ENCODE measurements at regions of chr10 and their contacts with region 1.

Region 1: GRCh38 chr10:3136763-3137611 is 35.6 kb downstream of the PITRM1 start:
- DNase-seq: peak; percentile 83 to 93
- ATAC-seq: peak; percentile 84 to 92 (median 90)
- H3K4me3 ChIP-seq: peak overlapping the region; percentile 48
- H3K27ac ChIP-seq: peak overlapping the region; percentile 87
- H3K4me1 ChIP-seq: peaks cover 18% of the 10 kb centered on the region
- H3K27me3 ChIP-seq: no peaks in the 10 kb centered on the region
- CTCF ChIP-seq: no peak

Region 2: GRCh38 chr10:2772816-2773631 is 364.0 kb before region 1 on chr10:
- intact Hi-C with region 1: no loop called
- DNase-seq: no peak
- ATAC-seq: no peak
- H3K4me3 ChIP-seq: no peak overlapping the region
- H3K27ac ChIP-seq: no peak overlapping the region
- H3K4me1 ChIP-seq: no peaks in the 10 kb centered on the region
- H3K27me3 ChIP-seq: no peaks in the 10 kb centered on the region
- CTCF ChIP-seq: no peak

Region 3: DNA sequence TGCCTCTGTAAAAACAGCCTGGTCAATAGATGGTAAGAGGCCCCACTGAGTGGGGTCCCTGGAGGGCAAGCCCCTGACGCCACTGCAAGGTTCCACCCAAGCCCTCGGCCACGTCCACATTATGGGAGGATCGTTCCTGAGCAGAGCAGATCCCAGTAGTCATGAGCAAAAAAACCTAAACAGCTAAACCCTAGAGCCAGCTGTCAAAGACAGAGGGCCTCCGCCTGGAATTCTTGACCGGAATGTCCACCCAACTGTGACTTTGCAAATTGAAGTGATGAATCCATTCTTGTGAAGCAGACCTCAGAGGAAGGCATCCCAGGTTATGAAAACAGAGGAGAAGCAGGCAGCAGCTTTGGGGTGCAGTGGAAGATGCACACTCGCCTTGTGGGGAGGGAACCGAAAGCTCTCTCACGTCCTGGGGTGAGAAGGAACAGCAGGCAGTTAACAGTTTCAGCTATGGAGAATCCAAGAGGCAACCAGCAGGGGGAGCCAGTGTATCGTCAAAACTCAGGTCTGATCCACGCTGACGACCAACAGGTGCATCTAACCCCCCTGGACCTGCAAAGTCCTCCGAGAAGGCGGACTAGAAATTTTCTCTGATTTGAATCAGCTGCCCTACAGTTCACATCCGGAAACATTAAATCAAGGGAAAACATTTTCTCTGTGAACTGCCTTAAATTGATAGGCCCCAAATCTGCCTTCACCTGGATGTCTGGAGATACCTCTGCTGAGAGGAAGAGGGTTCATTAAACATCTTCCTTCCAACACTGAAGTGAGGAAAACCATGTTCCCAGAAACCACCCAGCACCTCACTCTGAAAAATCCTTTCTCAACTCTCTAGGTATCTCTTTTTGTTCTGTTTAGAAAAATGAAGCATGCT is 208.8 kb before region 1 on chr10:
- intact Hi-C with region 1: no loop called
- DNase-seq: peak; percentile 43 to 74
- ATAC-seq: peak; percentile 86 to 90 (median 88)
- H3K4me3 ChIP-seq: no peak overlapping the region
- H3K27ac ChIP-seq: no peak overlapping the region
- H3K4me1 ChIP-seq: no peaks in the 10 kb centered on the region
- H3K27me3 ChIP-seq: peaks cover 2 to 10% (median 3%) of the 10 kb centered on the region in 3 donors
- CTCF ChIP-seq: peak; percentile 70

Region 4: GRCh38 chr10:3107426-3107961 is 29.5 kb before region 1 on chr10:
- intact Hi-C with region 1: loop called in 1 of 2 experiments (anchors 2 kb)
- DNase-seq: peak; percentile 93 to 95
- ATAC-seq: peak; percentile 86 to 87 (median 86)
- H3K4me3 ChIP-seq: peak overlapping the region; percentile 50
- H3K27ac ChIP-seq: peak overlapping the region; percentile 88
- H3K4me1 ChIP-seq: peaks cover 36% of the 10 kb centered on the region
- H3K27me3 ChIP-seq: no peaks in the 10 kb centered on the region
- CTCF ChIP-seq: no peak

Region 5: DNA sequence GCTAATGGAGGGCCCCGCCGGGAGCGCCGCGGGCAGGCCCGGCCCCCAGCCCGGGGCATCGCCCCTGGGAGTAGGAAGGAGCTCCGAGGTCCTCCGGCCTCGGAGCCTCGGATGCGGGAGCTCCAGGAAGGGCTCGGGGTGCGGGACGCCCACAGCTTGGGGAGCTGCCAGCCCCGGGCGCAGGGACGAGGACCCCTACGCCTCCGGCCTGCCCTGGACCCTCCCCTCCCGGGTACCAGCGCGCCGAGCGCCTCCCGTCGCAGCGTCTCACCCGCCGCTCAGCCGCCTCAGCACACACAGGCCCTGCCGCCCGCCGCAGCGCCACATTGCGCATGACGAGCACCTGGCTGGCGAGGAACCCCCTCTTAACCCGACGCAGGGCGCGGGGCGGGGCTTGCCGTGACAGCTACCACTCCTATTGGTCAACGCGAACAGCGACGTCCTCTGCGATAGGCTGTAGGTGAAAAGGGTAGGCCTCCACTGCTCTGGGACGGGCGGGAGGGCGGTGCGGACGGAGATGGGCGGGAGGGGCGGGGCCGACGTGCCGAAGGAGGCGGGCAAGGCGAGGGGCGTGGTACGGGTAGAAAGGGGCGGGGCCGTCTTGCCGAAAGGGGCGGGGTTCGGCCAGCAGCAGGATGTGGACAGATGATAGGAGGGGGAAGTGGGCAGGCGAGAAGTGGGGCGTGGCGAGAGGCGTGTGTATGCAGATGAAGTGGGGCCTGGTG is 35.6 kb after region 1 on chr10 and contains the start of gene PITRM1:
- intact Hi-C with region 1: no loop called
- DNase-seq: peak; percentile 99 to 100
- ATAC-seq: peak; percentile 96 to 97 (median 97)
- H3K4me3 ChIP-seq: peak within 1 kb of the TSS; percentile 91
- H3K27ac ChIP-seq: peak within 1 kb of the TSS; percentile 93
- H3K4me1 ChIP-seq: peaks cover 5% of the 10 kb centered on the region
- H3K27me3 ChIP-seq: no peaks in the 10 kb centered on the region
- CTCF ChIP-seq: no peak
- total RNA-seq, gene PITRM1: 74.5 to 112 (median 94.2) TPM

Region 6: GRCh38 chr10:3197348-3198003 is 60.5 kb after region 1 on chr10:
- intact Hi-C with region 1: no loop called
- DNase-seq: peak; percentile 82 to 89
- ATAC-seq: peak; percentile 94 to 98 (median 96)
- H3K4me3 ChIP-seq: peak overlapping the region; percentile 33
- H3K27ac ChIP-seq: no peak overlapping the region
- H3K4me1 ChIP-seq: peaks cover 7% of the 10 kb centered on the region
- H3K27me3 ChIP-seq: no peaks in the 10 kb centered on the region
- CTCF ChIP-seq: peak; percentile 89

Measured in psoas muscle (tissue), 8 donors.